ENCODE measurements at regions of chr5 and their contacts with region 1.

Region 1: DNA sequence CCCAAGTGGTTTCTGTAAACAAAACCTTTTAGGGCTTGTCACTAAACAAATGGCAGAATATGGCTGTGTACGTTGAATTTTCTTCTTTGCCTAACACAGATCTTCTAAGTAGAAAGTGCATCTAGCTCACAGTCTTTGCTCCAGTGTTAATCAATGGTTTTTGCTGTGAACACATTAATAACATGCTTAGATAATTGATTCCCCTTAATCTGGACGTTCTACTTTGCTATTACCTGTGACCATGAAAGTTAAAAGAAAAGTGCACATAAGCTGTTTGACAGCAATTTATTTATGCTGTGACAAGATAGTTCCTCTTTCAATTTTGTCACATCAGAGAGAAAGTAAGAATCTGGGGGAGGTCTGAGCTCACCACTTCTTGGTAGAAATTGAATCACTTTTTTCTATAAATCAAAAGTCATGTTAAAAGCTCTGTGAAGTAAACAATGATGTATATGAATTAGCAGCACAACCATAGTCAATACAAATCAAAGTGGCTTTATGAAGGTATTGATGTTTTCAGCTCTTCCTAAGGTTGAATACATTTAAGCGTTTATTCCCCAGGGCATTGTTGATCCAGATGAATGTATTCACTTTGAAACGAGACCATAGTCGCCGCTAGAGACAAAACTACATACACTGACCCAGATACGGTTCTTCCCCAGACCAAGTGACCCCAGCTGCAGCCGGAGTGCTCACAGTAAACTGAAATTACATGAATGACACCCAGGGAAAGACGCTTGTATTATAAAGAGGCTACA is 174.6 kb upstream of the ZNF608 start:
- DNase-seq: peak; percentile 52
- CTCF ChIP-seq: no peak

Region 2: GRCh38 chr5:124910354-124911016 is 10.6 kb before region 1 on chr5:
- CTCF ChIA-PET with region 1: interaction called, 10 read pairs
- POLR2A ChIA-PET with region 1: no interaction called
- DNase-seq: peak; percentile 29
- CTCF ChIP-seq: no peak